Dorsolateral prefrontal cortex (tissue), 120 donors: ENCODE measurements at regions of chr4 and their contacts with region 1.

Region 1: GRCh38 chr4:105509714-105510113 is 35.9 kb upstream of the PPA2 start:
- DNase-seq: no peak
- H3K4me3 ChIP-seq: no peak overlapping the region
- H3K27ac ChIP-seq: no peak overlapping the region
- H3K27me3 ChIP-seq: no peaks in the 10 kb centered on the region
- CTCF ChIP-seq: no peak

Region 2: DNA sequence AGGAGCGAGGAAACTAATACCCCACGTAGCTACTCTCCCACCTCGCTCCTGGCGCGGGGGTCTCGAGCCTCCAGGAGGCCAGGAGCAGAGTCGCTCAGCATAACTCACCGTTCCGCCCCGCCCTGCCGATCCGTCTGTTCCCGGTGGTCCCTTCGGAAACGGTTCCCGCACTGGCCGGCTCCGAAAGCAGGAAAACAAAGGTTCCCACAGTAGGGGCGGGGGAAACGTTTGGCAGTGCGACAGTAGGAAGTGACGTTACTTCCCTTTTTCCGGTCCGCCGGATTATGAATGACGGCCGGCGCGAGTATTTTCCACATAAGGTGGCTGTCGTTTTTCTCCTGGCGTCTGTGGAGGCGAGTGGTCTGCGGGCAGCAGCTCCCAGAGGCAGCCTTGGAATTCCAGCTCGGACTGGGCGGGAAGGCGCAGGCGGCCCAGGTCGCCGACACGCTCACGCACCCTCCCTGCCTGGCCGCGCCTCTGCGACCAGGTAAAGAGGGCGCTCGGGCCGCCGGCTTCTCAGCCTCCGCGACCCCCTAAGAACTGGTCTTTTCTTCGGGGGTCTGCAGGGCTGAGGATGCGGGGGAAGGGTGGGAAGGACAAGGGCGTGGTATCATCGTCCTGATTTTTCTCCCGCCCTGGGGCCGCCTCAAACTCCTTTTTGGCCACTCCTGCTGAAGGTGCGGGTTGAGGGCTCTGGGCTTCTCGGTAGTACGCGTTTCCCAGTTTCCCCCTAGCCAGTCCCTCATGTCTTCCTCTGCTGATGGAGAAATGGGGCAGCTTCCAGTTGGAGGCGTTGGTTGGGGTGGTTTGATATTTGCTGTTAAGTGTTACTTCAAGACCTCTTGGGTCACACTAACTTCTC is 199.0 kb after region 1 on chr4 and contains the starts of genes GSTCD and INTS12:
- intact Hi-C with region 1: loop called in 1 of 2 experiments (anchors 10 kb)
- DNase-seq: peak; percentile 82 to 95 (median 93)
- H3K4me3 ChIP-seq: peak within 1 kb of the TSS; percentile 59 to 100 (median 92)
- H3K27ac ChIP-seq: peak within 1 kb of the TSS in 58 of 59 donors; percentile 30 to 95 (median 82)
- H3K27me3 ChIP-seq: no peaks in the 10 kb centered on the region
- CTCF ChIP-seq: peak in 34 of 56 donors; percentile 4 to 52 (median 30)
- total RNA-seq, gene GSTCD: 7.1 to 19.5 (median 12.1) TPM
- total RNA-seq, gene INTS12: 10.9 to 21.8 (median 16.1) TPM